Ascending aorta (tissue), 2 donors: ENCODE measurements at regions of chr3 and their contacts with region 1.

Region 1: DNA sequence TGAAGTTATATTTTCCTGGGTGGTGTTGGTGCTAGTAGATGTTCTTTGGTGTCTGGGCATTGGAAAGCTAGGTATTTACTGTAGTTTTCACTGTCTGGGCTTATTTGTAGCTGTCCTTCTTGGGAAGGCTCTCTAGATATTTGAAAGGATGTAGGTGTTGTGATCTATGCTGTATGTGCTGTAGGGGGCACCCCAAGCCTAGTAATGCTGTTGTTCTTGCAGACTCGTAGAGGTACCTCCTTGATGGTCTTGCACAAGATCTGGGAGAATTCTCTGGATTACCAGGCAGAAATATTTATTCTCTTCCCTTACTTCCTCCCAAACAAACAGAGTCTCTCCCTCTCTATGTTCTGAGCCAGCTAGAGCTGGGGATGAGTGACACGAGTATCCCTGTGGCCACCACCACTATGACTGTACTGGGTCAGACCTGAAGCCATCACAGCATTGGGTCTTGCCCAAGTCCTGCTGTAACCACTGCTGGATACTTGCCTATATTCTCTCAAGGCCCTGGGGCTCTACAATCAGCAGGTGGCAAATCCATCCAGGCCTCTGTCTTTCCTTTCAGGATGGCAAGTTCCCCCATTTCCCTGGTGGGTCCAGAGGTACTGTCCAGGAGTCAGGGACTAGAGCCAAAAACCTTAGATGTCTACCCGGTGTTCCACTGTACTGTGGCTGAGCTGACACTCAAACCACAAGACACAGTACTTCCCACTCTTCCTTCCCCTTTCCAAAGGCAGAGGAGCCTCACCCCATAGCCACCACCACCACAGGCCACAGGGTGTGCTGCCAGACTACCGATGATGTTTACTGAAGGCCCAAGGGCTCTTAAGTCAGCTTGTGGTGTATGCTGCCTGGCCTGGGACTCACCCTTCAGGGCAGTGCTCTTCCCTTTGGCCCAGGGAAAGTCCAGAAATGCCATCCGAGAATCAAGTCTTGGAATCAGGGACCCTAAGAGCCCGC is 195.2 kb upstream of the DPPA4 start:
- DNase-seq: peak in 1 of 2 donors; percentile 67
- H3K4me3 ChIP-seq: no peak overlapping the region
- H3K27ac ChIP-seq: no peak overlapping the region
- H3K4me1 ChIP-seq: no peaks in the 10 kb centered on the region
- H3K27me3 ChIP-seq: no peaks in the 10 kb centered on the region
- CTCF ChIP-seq: peak; percentile 15 to 56 (median 27)

Region 2: GRCh38 chr3:108959017-108959416 is 573.5 kb before region 1 on chr3:
- intact Hi-C with region 1: no loop called
- DNase-seq: no peak
- H3K4me3 ChIP-seq: no peak overlapping the region
- H3K27ac ChIP-seq: no peak overlapping the region
- H3K4me1 ChIP-seq: no peaks in the 10 kb centered on the region
- H3K27me3 ChIP-seq: no peaks in the 10 kb centered on the region
- CTCF ChIP-seq: no peak

Region 3: DNA sequence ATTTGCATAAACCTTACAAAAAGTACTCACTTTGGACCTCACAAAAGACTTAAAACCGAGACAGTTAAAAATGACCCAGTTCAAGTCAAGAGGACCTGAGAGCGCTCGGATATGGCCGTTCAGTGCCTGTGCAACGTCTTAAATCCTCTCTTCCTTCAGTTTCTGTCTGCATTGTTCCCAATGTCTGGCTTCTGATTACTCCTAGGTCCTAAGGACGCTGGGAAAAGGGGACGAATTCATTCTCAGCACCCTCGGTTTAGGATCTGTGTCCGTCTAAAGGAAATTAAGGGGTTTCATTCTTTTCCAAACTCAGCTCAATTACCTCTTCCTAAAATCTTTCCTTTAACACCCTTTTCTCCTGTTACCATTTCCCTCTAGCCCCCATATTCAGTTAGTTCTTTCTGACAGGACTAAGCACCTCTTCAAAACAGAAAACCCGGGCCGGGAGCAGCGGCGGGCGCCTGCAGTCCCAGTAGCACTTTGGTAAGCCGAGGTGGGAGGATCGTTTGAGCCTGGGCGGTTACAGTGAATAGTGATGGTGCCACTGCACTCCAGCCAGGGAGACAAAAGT is 196.2 kb before region 1 on chr3:
- intact Hi-C with region 1: no loop called
- DNase-seq: no peak
- H3K4me3 ChIP-seq: peak overlapping the region; percentile 37 to 61
- H3K27ac ChIP-seq: no peak overlapping the region
- H3K4me1 ChIP-seq: no peaks in the 10 kb centered on the region
- H3K27me3 ChIP-seq: no peaks in the 10 kb centered on the region
- CTCF ChIP-seq: no peak

Region 4: DNA sequence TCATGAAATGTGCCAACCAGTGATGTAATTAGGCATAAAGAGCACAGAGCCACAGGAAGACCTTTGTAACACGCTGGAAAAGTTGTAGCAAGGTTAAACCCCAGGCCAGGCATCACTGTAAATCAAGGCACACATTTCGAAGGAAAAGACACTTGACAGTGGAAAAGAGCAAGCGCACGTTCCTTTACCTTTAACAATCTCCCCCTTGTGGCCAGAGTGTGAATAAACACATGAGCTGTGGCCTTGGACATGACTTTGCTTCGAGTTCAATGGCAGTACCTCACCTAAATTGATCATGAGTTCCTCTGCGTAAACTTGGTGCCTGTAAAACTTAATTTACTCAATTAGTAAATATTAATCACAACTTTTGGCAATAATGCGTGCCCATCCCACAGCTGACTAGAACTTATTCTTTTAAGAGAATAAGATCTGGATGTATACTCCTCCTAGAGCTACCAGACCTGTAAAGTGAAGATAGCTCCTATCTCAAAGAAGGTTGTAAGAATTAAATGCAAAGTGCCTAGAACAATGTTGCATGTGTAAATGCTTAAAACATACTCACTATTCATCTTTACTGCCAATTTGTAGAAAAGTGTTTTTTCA is 782.1 kb after region 1 on chr3:
- intact Hi-C with region 1: loop called (anchors 5 kb)
- DNase-seq: peak in 1 of 2 donors; percentile 73
- H3K4me3 ChIP-seq: no peak overlapping the region
- H3K27ac ChIP-seq: no peak overlapping the region
- H3K4me1 ChIP-seq: no peaks in the 10 kb centered on the region
- H3K27me3 ChIP-seq: no peaks in the 10 kb centered on the region
- CTCF ChIP-seq: peak in 2 of 3 experiments; percentile 56 to 67

Region 5: GRCh38 chr3:110686701-110687100 is 1154.2 kb after region 1 on chr3:
- intact Hi-C with region 1: no loop called
- DNase-seq: no peak
- H3K4me3 ChIP-seq: no peak overlapping the region
- H3K27ac ChIP-seq: no peak overlapping the region
- H3K4me1 ChIP-seq: no peaks in the 10 kb centered on the region
- H3K27me3 ChIP-seq: no peaks in the 10 kb centered on the region
- CTCF ChIP-seq: no peak